IMR-90 (cell line): ENCODE measurements at regions of chr7 and their contacts with region 1.

Region 1: DNA sequence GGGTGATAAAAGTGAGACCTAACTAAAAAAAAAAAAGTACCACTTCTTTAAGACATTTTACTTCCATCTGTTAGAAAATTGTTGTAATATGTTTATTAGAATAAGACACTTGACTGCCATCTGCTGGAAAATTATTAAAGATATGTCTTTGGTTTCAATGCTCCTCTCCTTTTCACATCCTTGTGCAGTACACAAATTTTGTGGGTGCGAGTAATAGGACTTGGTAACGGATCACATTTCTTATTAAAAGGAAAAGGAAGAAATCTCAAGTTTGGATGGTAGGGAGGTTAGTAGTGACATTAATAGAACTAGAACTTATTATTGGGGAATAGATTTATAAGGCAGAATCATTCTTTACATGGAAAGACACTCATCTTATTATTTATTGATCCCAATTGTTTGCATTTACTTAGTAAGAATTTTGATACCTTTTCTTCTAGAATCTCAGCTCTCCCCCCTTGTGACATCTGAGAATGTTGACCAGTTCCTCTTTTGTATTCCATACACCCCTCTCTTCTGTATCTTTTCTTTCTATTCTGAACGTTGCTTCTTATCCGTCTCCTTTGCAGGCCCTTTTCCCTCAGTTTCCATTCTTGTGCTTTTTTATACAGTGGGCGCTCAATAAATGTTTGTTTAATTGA is 43.1 kb upstream of the RPA3 start:
- DNase-seq: peak; percentile 66
- ATAC-seq: no peak
- H3K4me3 ChIP-seq: no peak overlapping the region
- H3K27ac ChIP-seq: no peak overlapping the region
- H3K4me1 ChIP-seq: no peaks in the 10 kb centered on the region; the same call in 1 of the 2 replicates
- H3K27me3 ChIP-seq: no peaks in the 10 kb centered on the region
- CTCF ChIP-seq: peak; percentile 50
- POLR2A ChIP-seq: no peak
- RAD21 ChIP-seq: peak; percentile 48

Region 2: GRCh38 chr7:7424151-7424873 is 337.1 kb before region 1 on chr7:
- CTCF ChIA-PET with region 1: no interaction called
- POLR2A ChIA-PET with region 1: no interaction called
- dilution Hi-C with region 1: no loop called
- in situ Hi-C with region 1: loop called (anchors 25 kb)
- intact Hi-C with region 1: loop called (anchors 5 kb)
- DNase-seq: peak; percentile 67
- ATAC-seq: peak; percentile 89
- H3K4me3 ChIP-seq: peak overlapping the region; percentile 72
- H3K27ac ChIP-seq: 0 out of 2 replicates have a peak overlapping the region, but pooled peaks have one; percentile 16
- H3K4me1 ChIP-seq: 0 out of 2 replicates have a peak, but pooled peaks cover under 1% of the 10 kb centered on the region
- H3K27me3 ChIP-seq: no peaks in the 10 kb centered on the region; the same call in 1 of the 2 replicates
- CTCF ChIP-seq: peak; percentile 94
- POLR2A ChIP-seq: peak; percentile 45; the same call in 1 of the 2 replicates
- RAD21 ChIP-seq: peak; percentile 98

Region 3: DNA sequence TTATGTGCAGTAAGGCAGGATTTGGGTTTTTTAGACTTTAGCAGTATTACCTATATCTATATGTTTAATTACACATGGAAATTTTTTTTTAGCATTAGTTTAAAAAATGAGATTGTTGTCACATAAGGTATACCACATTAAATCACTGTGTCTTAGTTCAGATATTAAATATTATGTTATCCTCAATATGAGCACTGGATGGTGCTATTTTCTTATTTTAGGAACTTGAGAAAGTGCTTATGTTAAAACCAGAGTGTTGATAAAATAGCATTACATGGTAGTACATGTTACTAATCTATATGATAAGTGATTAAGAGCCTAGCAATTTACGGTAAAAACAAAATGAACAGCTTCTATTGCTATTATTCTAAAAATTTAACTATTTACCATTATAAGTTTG is 166.0 kb before region 1 on chr7:
- CTCF ChIA-PET with region 1: interaction called, 3 read pairs
- POLR2A ChIA-PET with region 1: no interaction called
- dilution Hi-C with region 1: no loop called
- in situ Hi-C with region 1: no loop called
- intact Hi-C with region 1: loop called (anchors 2 kb)
- DNase-seq: peak; percentile 33
- ATAC-seq: peak; percentile 65; the same call in 1 of the 2 replicates
- H3K4me3 ChIP-seq: no peak overlapping the region
- H3K27ac ChIP-seq: no peak overlapping the region
- H3K4me1 ChIP-seq: no peaks in the 10 kb centered on the region
- H3K27me3 ChIP-seq: no peaks in the 10 kb centered on the region
- CTCF ChIP-seq: peak; percentile 50
- POLR2A ChIP-seq: no peak
- RAD21 ChIP-seq: peak; percentile 58

Region 4: GRCh38 chr7:7662527-7662926 is 98.9 kb before region 1 on chr7:
- CTCF ChIA-PET with region 1: no interaction called
- POLR2A ChIA-PET with region 1: no interaction called
- dilution Hi-C with region 1: no loop called
- in situ Hi-C with region 1: no loop called
- intact Hi-C with region 1: loop called (anchors 1 kb)
- DNase-seq: peak; percentile 34
- ATAC-seq: peak; percentile 51
- H3K4me3 ChIP-seq: no peak overlapping the region
- H3K27ac ChIP-seq: no peak overlapping the region
- H3K4me1 ChIP-seq: no peaks in the 10 kb centered on the region
- H3K27me3 ChIP-seq: no peaks in the 10 kb centered on the region
- CTCF ChIP-seq: peak; percentile 55
- POLR2A ChIP-seq: no peak
- RAD21 ChIP-seq: peak; percentile 61

Region 5: DNA sequence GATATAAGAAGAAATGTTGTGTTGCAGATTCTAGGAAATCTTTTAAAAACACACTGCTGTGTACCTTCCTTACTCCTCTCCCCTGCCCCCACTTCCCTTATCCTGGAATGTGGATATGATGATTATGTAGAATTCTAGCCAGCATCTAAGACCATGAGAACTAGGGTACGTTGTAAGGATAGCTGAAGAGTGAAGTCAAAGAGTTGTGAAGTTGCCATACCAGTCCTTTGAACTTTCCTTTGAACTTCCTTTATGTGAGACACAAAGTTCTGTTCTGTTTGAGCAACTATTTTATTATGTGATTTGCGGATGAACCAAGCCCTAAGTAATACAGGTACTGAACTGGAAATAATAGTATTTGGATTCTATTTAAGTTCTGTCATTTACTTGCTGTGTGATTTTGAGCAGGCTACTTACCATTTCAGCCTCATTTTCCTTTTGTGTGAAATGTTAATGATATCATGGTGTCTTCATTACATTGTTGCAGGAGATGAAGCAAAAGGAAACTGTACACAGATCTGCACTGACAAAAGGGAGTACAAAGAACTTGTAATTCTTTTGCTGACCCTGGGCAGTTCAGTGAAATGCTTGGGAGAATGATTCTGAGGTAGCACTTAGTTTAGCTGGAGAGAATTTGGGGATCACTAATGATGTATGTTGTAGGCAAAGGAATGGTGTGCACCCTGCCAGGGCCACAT is 74.5 kb before region 1 on chr7:
- CTCF ChIA-PET with region 1: interaction called, 6 read pairs
- POLR2A ChIA-PET with region 1: no interaction called
- dilution Hi-C with region 1: no loop called
- in situ Hi-C with region 1: loop called (anchors 5 kb)
- intact Hi-C with region 1: no loop called
- DNase-seq: no peak
- ATAC-seq: no peak; the same call in 1 of the 2 replicates
- H3K4me3 ChIP-seq: no peak overlapping the region
- H3K27ac ChIP-seq: no peak overlapping the region
- H3K4me1 ChIP-seq: no peaks in the 10 kb centered on the region; the same call in 1 of the 2 replicates
- H3K27me3 ChIP-seq: no peaks in the 10 kb centered on the region
- CTCF ChIP-seq: no peak
- POLR2A ChIP-seq: no peak
- RAD21 ChIP-seq: no peak

Region 6: DNA sequence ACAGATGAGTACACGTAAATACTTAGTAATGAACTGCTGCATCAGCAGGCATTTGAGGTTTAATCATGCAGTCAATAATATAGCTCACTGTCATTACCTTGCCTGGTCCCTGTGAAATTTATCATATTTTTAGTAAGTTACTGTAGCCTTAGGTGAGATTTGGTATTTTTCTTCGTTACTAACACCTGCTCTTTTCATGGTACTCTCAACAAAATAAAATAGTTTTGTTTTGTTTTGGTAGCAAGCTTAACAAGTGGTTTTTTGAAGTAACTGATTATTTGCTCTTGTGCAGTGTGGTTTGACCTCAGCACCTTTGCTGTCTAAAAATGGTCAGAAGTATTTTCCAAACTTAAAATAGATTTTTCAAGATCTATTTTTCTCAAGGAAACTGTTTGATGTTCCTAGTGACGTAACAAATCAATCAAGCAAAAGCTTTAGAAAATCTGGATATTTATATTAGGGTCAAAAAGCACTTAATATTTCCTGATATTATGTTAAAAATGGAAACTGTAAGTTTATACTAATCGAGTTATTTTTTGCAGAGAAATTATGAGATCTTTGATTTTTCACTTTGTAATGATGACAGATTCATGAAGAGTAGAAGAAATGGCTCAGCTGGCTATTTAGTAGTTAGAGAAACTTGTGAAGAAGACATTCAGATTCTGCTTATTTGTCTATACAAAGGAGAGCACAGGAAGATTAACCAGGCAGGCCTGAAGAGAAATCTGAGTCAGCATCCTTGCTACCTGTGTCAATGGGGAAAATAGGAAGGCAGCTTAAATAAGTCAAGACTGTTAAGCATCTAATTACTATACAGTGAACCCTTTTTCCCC is 22.0 kb before region 1 on chr7:
- CTCF ChIA-PET with region 1: no interaction called
- POLR2A ChIA-PET with region 1: no interaction called
- dilution Hi-C with region 1: no loop called
- in situ Hi-C with region 1: no loop called
- intact Hi-C with region 1: no loop called
- DNase-seq: no peak
- ATAC-seq: no peak
- H3K4me3 ChIP-seq: no peak overlapping the region
- H3K27ac ChIP-seq: no peak overlapping the region
- H3K4me1 ChIP-seq: no peaks in the 10 kb centered on the region
- H3K27me3 ChIP-seq: no peaks in the 10 kb centered on the region
- CTCF ChIP-seq: no peak
- POLR2A ChIP-seq: no peak
- RAD21 ChIP-seq: no peak

Region 7: GRCh38 chr7:7789551-7789988 is 28.1 kb after region 1 on chr7:
- CTCF ChIA-PET with region 1: no interaction called
- POLR2A ChIA-PET with region 1: no interaction called
- dilution Hi-C with region 1: no loop called
- in situ Hi-C with region 1: no loop called
- intact Hi-C with region 1: loop called (anchors 1 kb)
- DNase-seq: no peak
- ATAC-seq: no peak
- H3K4me3 ChIP-seq: no peak overlapping the region
- H3K27ac ChIP-seq: no peak overlapping the region
- H3K4me1 ChIP-seq: peaks cover 6% of the 10 kb centered on the region
- H3K27me3 ChIP-seq: no peaks in the 10 kb centered on the region
- CTCF ChIP-seq: no peak
- POLR2A ChIP-seq: no peak
- RAD21 ChIP-seq: no peak

Region 8: DNA sequence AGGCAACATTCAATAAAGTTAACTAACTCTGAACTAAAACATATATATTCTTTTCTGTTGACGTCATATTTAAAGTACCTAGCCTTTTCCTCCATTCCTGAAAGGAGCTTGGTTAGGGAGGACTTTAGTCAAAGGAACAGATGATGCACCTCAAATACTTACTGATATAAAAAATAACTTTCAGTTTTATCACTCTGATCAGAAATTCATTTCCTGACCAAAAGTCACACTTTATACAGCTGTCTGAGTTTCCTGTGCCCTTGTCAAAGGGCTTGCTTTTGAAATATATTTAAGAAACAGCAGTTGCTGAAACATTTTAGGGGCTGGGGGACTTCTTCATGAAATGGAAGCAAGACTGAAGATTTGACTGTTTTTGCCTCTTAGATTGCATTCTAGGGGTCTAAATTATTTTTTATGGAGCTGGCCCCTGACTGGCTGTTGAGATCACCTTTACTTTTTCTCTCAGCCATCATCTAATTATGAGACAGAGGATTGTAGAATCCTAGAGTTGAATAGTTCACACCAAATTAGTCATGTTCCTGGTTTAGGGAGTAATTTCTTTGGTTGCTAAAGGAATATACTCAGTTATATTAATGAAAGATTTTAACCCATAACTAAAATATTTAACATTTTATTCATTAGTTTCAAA is 253.8 kb after region 1 on chr7:
- CTCF ChIA-PET with region 1: no interaction called
- POLR2A ChIA-PET with region 1: no interaction called
- dilution Hi-C with region 1: no loop called
- in situ Hi-C with region 1: no loop called
- intact Hi-C with region 1: no loop called
- DNase-seq: no peak
- ATAC-seq: no peak
- H3K4me3 ChIP-seq: no peak overlapping the region
- H3K27ac ChIP-seq: no peak overlapping the region
- H3K4me1 ChIP-seq: no peaks in the 10 kb centered on the region
- H3K27me3 ChIP-seq: no peaks in the 10 kb centered on the region
- CTCF ChIP-seq: no peak
- POLR2A ChIP-seq: no peak
- RAD21 ChIP-seq: no peak

Region 9: GRCh38 chr7:8190119-8190895 is 428.8 kb after region 1 on chr7:
- CTCF ChIA-PET with region 1: no interaction called
- POLR2A ChIA-PET with region 1: no interaction called
- dilution Hi-C with region 1: no loop called
- in situ Hi-C with region 1: no loop called
- intact Hi-C with region 1: loop called (anchors 2 kb)
- DNase-seq: peak; percentile 54
- ATAC-seq: peak; percentile 77
- H3K4me3 ChIP-seq: no peak overlapping the region
- H3K27ac ChIP-seq: no peak overlapping the region
- H3K4me1 ChIP-seq: no peaks in the 10 kb centered on the region
- H3K27me3 ChIP-seq: no peaks in the 10 kb centered on the region
- CTCF ChIP-seq: peak; percentile 60
- POLR2A ChIP-seq: no peak
- RAD21 ChIP-seq: peak; percentile 72